Activated CD8-positive, alpha-beta T cell treated with anti-CD3 and anti-CD28 coated beads for 36 hours (primary cell): ENCODE measurements at regions of chr6 and their contacts with region 1.

Region 1: GRCh38 chr6:15621203-15622044 is 41.4 kb downstream of the DTNBP1 start:
- DNase-seq: peak; percentile 50
- ATAC-seq: peak; percentile 83
- H3K4me3 Mint-ChIP-seq: no peak overlapping the region
- H3K27ac Mint-ChIP-seq: peak overlapping the region; percentile 29
- H3K4me1 Mint-ChIP-seq: peaks cover 53% of the 10 kb centered on the region
- H3K27me3 Mint-ChIP-seq: no peaks in the 10 kb centered on the region
- CTCF ChIP-seq: no peak

Region 2: DNA sequence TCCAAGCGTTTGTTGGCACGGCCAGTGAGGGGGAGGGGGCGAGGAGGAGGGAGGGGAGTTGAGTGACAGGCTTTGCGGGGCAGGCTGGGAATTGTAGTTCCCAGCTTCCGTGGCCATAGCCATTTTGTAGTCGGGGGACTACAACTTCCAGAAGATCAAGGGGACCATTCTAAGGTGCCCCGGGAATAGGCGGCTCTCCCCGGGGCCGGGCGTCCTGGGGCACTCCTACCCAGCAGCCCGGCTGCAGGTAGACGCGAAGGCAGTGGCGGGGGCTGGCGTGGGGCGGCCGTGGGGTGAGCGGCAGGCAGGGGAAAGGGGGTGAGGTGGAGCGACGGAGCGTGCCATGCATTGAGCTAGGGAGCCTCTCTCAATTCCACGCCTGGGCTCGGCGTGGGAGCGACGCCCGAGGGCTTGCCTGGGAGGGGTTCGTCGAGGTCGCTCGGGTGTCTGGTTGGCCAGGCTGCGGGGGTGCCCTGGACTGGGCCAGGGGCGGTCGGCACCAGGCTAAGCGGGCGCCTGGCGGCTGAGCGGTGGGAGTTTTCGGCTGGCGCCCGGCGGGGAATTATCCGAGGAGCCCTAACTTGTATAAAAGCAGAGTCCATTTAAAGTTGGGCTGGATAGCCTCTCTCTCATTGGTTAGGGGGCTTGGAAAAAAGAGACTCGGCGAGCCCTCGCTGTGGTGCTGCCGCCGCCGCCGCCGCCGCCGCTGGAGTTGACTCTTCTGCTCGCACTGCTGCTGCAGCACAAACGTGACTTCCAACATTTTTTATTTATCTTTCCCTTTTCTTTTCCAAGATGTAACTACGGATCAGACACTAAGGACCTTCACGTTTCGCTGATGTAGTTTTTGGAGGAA is 375.8 kb before region 1 on chr6 and contains the start of gene JARID2:
- CTCF ChIA-PET with region 1: interaction called, 4 read pairs
- POLR2A ChIA-PET with region 1: no interaction called
- intact Hi-C with region 1: loop called (anchors 5 kb)
- DNase-seq: peak; percentile 99
- ATAC-seq: peak; percentile 66
- H3K4me3 Mint-ChIP-seq: peak within 1 kb of the TSS; percentile 100
- H3K27ac Mint-ChIP-seq: peak within 1 kb of the TSS; percentile 97
- H3K4me1 Mint-ChIP-seq: peaks cover 18% of the 10 kb centered on the region
- H3K27me3 Mint-ChIP-seq: no peaks in the 10 kb centered on the region
- CTCF ChIP-seq: no peak
- total RNA-seq, gene JARID2: 25.4 to 25.5 TPM

Region 3: DNA sequence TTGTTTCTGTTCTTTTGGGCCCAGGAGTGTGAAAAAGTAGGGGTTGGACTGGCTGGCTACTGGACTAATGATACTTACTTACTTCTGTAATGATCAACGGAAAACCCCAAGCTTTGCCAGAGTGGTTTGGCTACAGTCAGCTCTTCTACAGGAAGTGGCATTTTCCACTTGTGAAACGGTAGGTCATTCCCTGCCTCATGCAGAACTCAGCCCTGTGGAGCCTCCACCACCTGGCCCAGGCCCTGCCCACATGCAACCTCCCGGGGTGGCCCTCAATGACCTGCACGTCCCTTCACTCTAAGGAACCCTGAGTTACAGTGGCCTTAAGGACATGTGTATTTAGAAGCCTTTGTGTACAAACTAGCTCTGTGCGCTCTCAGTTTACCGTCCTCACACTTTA is 99.0 kb before region 1 on chr6:
- CTCF ChIA-PET with region 1: interaction called, 13 read pairs
- POLR2A ChIA-PET with region 1: no interaction called
- intact Hi-C with region 1: loop called (anchors 5 kb)
- DNase-seq: no peak
- ATAC-seq: peak; percentile 39
- H3K4me3 Mint-ChIP-seq: no peak overlapping the region
- H3K27ac Mint-ChIP-seq: peak overlapping the region; percentile 76
- H3K4me1 Mint-ChIP-seq: peaks cover 15% of the 10 kb centered on the region
- H3K27me3 Mint-ChIP-seq: no peaks in the 10 kb centered on the region
- CTCF ChIP-seq: no peak

Region 4: DNA sequence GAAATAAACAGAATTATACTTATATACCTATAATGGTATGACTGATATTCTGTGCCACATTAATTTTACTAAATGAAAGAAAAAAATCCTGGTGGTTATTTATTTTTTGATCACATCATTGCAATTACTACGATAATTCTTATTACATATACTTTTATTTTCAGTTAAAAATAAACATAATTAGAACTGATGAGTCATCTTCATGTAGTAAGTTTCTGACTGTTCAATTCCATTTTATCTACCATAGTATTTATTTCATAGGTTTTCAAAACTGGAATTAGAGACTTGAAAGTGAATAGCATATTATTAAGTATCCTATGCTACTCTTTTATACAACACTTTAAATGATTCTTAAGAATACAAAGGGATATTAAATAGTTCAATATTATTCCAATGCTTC is 38.9 kb before region 1 on chr6:
- CTCF ChIA-PET with region 1: interaction called, 16 read pairs
- POLR2A ChIA-PET with region 1: no interaction called
- intact Hi-C with region 1: no loop called
- DNase-seq: no peak
- ATAC-seq: no peak
- H3K4me3 Mint-ChIP-seq: no peak overlapping the region
- H3K27ac Mint-ChIP-seq: no peak overlapping the region
- H3K4me1 Mint-ChIP-seq: peaks cover 13% of the 10 kb centered on the region
- H3K27me3 Mint-ChIP-seq: no peaks in the 10 kb centered on the region
- CTCF ChIP-seq: no peak

Region 5: GRCh38 chr6:15602154-15602553 is 19.3 kb before region 1 on chr6:
- CTCF ChIA-PET with region 1: interaction called, 19 read pairs
- POLR2A ChIA-PET with region 1: no interaction called
- intact Hi-C with region 1: no loop called
- DNase-seq: peak; percentile 32
- ATAC-seq: peak; percentile 20
- H3K4me3 Mint-ChIP-seq: no peak overlapping the region
- H3K27ac Mint-ChIP-seq: no peak overlapping the region
- H3K4me1 Mint-ChIP-seq: peaks cover 12% of the 10 kb centered on the region
- H3K27me3 Mint-ChIP-seq: no peaks in the 10 kb centered on the region
- CTCF ChIP-seq: no peak

Region 6: GRCh38 chr6:15608396-15608795 is 13.0 kb before region 1 on chr6:
- CTCF ChIA-PET with region 1: interaction called, 39 read pairs
- POLR2A ChIA-PET with region 1: no interaction called
- intact Hi-C with region 1: no loop called
- DNase-seq: no peak
- ATAC-seq: no peak
- H3K4me3 Mint-ChIP-seq: no peak overlapping the region
- H3K27ac Mint-ChIP-seq: no peak overlapping the region
- H3K4me1 Mint-ChIP-seq: peaks cover 6% of the 10 kb centered on the region
- H3K27me3 Mint-ChIP-seq: no peaks in the 10 kb centered on the region
- CTCF ChIP-seq: no peak